OCI-LY7 (cell line): ENCODE measurements at regions of chr16 and their contacts with region 1.

Region 1: GRCh38 chr16:78122774-78123315 is 23.4 kb downstream of the WWOX start:
- DNase-seq: peak; percentile 63
- H3K4me3 ChIP-seq: no peak overlapping the region
- H3K27ac ChIP-seq: no peak overlapping the region
- H3K4me1 ChIP-seq: no peaks in the 10 kb centered on the region
- CTCF ChIP-seq: peak; percentile 80

Region 2: GRCh38 chr16:76639685-76640289 is 1483.1 kb before region 1 on chr16:
- CTCF ChIA-PET with region 1: no interaction called
- POLR2A ChIA-PET with region 1: no interaction called
- intact Hi-C with region 1: no loop called
- DNase-seq: peak; percentile 12
- H3K4me3 ChIP-seq: no peak overlapping the region
- H3K27ac ChIP-seq: no peak overlapping the region
- H3K4me1 ChIP-seq: no peaks in the 10 kb centered on the region
- CTCF ChIP-seq: peak; percentile 73

Region 3: GRCh38 chr16:78235168-78235800 is 112.4 kb after region 1 on chr16:
- CTCF ChIA-PET with region 1: interaction called, 3 read pairs
- POLR2A ChIA-PET with region 1: no interaction called
- intact Hi-C with region 1: loop called (anchors 1 kb)
- DNase-seq: peak; percentile 62
- H3K4me3 ChIP-seq: no peak overlapping the region
- H3K27ac ChIP-seq: no peak overlapping the region
- H3K4me1 ChIP-seq: no peaks in the 10 kb centered on the region
- CTCF ChIP-seq: peak; percentile 91

Region 4: DNA sequence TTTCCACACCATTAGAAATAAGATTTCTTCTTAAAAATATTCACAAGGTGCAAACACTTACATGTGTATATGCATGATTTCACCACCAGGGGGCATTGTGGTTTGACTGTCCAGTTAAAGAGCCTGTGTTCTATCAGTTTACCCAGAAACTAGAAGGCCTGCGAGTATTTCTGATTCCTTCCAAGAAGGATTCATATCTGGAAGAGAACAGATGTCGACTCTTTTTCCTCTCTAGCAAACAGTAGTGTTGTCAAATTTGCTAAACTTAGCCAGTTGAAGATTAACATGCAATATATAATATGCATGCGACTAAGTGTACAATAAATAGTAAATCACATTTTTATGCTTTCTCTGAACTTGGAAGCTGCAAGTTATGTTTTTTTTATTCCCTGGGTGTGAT is 380.8 kb after region 1 on chr16:
- CTCF ChIA-PET with region 1: no interaction called
- POLR2A ChIA-PET with region 1: no interaction called
- intact Hi-C with region 1: loop called (anchors 10 kb)
- DNase-seq: peak; percentile 39
- H3K4me3 ChIP-seq: no peak overlapping the region
- H3K27ac ChIP-seq: no peak overlapping the region
- H3K4me1 ChIP-seq: no peaks in the 10 kb centered on the region
- CTCF ChIP-seq: peak; percentile 87

Region 5: GRCh38 chr16:78770353-78771091 is 647.7 kb after region 1 on chr16:
- CTCF ChIA-PET with region 1: no interaction called
- POLR2A ChIA-PET with region 1: interaction called, 6 read pairs
- intact Hi-C with region 1: loop called (anchors 2 kb)
- DNase-seq: peak; percentile 61
- H3K4me3 ChIP-seq: no peak overlapping the region
- H3K27ac ChIP-seq: no peak overlapping the region
- H3K4me1 ChIP-seq: no peaks in the 10 kb centered on the region
- CTCF ChIP-seq: peak; percentile 79

Region 6: DNA sequence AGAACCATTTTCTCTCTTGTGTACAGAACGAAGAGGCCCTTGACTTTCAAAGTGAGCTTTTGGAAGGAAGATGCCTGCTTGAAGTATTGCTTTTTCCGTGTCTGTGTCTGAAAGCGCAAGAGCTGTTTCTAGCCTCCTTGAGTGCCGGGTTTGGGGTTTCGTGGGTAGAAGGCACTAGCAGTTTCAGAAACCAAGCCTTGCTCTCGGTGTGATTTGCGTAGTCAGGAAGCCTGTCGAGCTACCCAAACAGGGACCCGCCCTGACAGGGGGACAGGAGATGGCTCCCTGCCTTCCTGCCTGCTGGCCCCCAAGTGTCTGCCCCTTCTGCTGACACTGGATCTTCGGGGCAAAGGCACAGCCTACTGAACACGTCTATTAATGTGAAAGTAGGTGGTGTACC is 1155.7 kb after region 1 on chr16:
- CTCF ChIA-PET with region 1: no interaction called
- POLR2A ChIA-PET with region 1: no interaction called
- intact Hi-C with region 1: loop called (anchors 10 kb)
- DNase-seq: peak; percentile 42
- H3K4me3 ChIP-seq: no peak overlapping the region
- H3K27ac ChIP-seq: no peak overlapping the region
- H3K4me1 ChIP-seq: peaks cover 21% of the 10 kb centered on the region
- CTCF ChIP-seq: no peak

Region 7: GRCh38 chr16:79601931-79602627 is 1479.2 kb after region 1 on chr16:
- CTCF ChIA-PET with region 1: no interaction called
- POLR2A ChIA-PET with region 1: no interaction called
- intact Hi-C with region 1: loop called (anchors 10 kb)
- DNase-seq: peak; percentile 60
- H3K4me3 ChIP-seq: no peak overlapping the region
- H3K27ac ChIP-seq: no peak overlapping the region
- H3K4me1 ChIP-seq: peaks cover 7% of the 10 kb centered on the region
- CTCF ChIP-seq: peak; percentile 98